ENCODE measurements at regions of chr1 and their contacts with region 1.

Region 1: GRCh38 chr1:150363426-150364230 is at the start of gene RPRD2:
- DNase-seq: peak; percentile 83 to 100 (median 99)
- ATAC-seq: peak; percentile 97
- H3K4me3 ChIP-seq: peak within 1 kb of the TSS; percentile 99
- H3K4me3 Mint-ChIP-seq: peak within 1 kb of the TSS; percentile 86 to 100 (median 98)
- H3K27ac ChIP-seq: peak within 1 kb of the TSS; percentile 84
- H3K27ac Mint-ChIP-seq: peak within 1 kb of the TSS; percentile 95 to 100 (median 98)
- H3K4me1 ChIP-seq: peaks cover 10% of the 10 kb centered on the region in 2 donors
- H3K4me1 Mint-ChIP-seq: peaks cover 25 to 37% (median 32%) of the 10 kb centered on the region in 7 donors
- H3K27me3 ChIP-seq: no peaks in the 10 kb centered on the region
- H3K27me3 Mint-ChIP-seq: peaks cover 0 to 2% (median 0%) of the 10 kb centered on the region in 5 donors
- total RNA-seq, gene RPRD2: 33.2 to 62.2 (median 40.6) TPM

Region 2: DNA sequence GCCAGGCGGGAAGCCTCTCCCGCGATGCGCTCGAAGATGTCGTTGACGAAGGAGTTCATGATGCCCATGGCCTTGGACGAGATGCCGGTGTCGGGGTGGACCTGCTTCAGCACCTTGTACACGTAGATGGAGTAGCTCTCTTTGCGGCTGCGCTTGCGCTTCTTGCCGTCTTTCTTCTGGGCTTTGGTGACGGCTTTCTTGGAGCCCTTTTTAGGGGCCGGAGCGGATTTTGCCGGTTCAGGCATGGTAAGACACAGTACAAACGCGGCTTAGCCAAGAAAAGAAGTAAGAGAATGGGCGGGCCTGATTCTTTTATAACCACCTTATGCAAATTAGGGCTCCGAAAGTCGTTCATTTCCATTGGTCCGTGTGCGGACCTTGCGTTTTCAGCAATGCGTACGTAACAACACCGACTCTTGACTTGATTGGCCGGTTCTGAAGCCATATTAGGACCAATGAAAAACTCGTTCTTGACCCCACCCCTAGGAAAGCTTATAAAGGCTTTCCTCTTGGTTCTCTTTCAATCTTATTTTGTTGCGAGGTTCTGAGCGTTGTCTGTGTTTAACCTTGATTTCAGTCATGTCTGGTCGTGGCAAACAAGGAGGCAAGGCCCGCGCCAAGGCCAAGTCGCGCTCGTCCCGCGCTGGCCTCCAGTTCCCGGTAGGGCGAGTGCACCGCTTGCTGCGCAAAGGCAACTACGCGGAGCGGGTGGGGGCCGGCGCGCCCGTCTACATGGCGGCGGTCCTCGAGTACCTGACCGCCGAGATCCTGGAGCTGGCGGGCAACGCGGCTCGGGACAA is 477.0 kb before region 1 on chr1:
- CTCF ChIA-PET with region 1: no interaction called
- POLR2A ChIA-PET with region 1: interaction called, 38 read pairs
- intact Hi-C with region 1: no loop called
- DNase-seq: peak; percentile 71 to 98 (median 95)
- ATAC-seq: peak; percentile 79
- H3K4me3 ChIP-seq: peak overlapping the region; percentile 97
- H3K4me3 Mint-ChIP-seq: no peak overlapping the region
- H3K27ac ChIP-seq: peak overlapping the region; percentile 93
- H3K27ac Mint-ChIP-seq: no peak overlapping the region
- H3K4me1 ChIP-seq: peaks cover 17 to 28% of the 10 kb centered on the region in 2 donors
- H3K4me1 Mint-ChIP-seq: peaks cover 10 to 15% (median 12%) of the 10 kb centered on the region in 7 donors
- H3K27me3 ChIP-seq: no peaks in the 10 kb centered on the region
- H3K27me3 Mint-ChIP-seq: no peaks in the 10 kb centered on the region

Region 3: DNA sequence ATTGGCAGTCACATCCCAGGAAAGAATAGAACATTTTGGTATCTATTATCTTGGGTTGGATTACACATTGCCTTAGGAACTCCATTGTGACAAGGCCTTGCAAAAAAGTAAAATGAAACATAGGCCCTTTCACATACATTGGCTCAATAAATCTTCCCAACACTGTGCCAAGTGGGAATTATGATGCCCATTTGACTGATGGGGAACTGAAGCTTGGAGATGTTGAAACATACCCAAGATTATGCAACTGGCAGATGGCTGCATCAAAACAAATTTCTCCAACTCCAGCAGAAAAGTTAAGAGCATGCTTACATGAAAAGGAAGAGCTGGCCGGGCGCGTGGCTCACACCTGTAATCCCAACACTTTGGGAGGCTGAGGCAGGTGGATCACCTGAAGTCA is 187.0 kb before region 1 on chr1:
- CTCF ChIA-PET with region 1: no interaction called
- POLR2A ChIA-PET with region 1: no interaction called
- intact Hi-C with region 1: no loop called
- DNase-seq: no peak
- ATAC-seq: no peak
- H3K4me3 ChIP-seq: no peak overlapping the region
- H3K4me3 Mint-ChIP-seq: no peak overlapping the region
- H3K27ac ChIP-seq: no peak overlapping the region
- H3K27ac Mint-ChIP-seq: peak overlapping the region in 1 of 9 donors; percentile 23
- H3K4me1 ChIP-seq: no peaks in the 10 kb centered on the region
- H3K4me1 Mint-ChIP-seq: peaks cover 0 to 6% (median 0%) of the 10 kb centered on the region in 7 donors
- H3K27me3 ChIP-seq: no peaks in the 10 kb centered on the region
- H3K27me3 Mint-ChIP-seq: peaks cover 0 to 3% (median 0%) of the 10 kb centered on the region in 5 donors

Region 4: DNA sequence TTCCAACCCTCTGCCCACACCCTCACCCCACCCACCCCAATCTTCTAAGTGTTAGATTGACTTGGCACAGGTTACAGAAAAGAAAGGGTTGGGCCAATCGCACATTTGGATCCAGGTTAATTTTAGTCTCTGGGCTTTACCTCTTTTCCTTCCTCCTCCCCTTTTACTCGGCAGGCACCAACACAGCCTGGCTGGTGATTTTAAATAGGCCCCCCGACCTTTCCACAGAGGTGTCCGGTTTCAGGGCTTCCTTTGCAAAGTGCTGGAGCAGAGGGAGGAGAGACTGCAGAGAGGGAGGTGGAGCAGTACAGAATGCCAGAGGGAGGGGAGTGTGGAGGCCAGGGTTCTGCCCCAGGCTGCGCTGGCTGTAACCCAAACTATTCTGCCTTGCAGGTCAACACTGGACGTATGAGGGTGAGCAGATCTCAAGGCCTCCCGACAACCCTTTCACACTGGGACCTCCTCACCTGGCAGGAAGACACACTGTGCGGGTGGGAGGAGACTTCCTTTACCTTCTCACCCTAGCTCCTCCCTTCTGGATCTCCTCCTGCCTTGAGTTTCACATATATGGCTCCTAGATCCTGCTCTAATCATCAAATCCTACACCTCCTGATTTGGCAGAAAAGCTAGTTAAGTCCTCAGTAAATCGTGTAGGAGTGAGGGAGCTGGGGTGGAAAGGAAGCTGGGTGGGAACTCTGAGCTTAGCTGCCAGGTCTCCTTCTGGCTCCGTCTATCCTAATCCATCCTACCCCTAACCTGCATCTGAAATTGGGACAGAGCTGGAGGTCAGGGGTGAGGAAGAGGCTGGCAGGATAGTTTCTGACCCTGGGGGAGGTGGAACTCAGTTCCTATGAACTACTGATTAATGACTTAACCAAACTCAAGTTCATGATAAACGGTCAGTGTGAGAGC is 103.6 kb before region 1 on chr1:
- CTCF ChIA-PET with region 1: no interaction called
- POLR2A ChIA-PET with region 1: interaction called, 13 read pairs
- intact Hi-C with region 1: no loop called
- DNase-seq: no peak
- ATAC-seq: no peak
- H3K4me3 ChIP-seq: no peak overlapping the region
- H3K4me3 Mint-ChIP-seq: peak overlapping the region in 1 of 10 donors; percentile 32
- H3K27ac ChIP-seq: no peak overlapping the region
- H3K27ac Mint-ChIP-seq: no peak overlapping the region
- H3K4me1 ChIP-seq: peaks cover 6 to 8% of the 10 kb centered on the region in 2 donors
- H3K4me1 Mint-ChIP-seq: peaks cover 6 to 23% (median 15%) of the 10 kb centered on the region in 7 donors
- H3K27me3 ChIP-seq: peaks cover 0 to 10% of the 10 kb centered on the region in 2 donors
- H3K27me3 Mint-ChIP-seq: peaks cover 13 to 49% (median 26%) of the 10 kb centered on the region in 5 donors

Region 5: GRCh38 chr1:150293433-150294168 is 70.0 kb before region 1 on chr1 and contains the start of gene MRPS21:
- CTCF ChIA-PET with region 1: no interaction called
- POLR2A ChIA-PET with region 1: interaction called, 4 read pairs
- intact Hi-C with region 1: loop called (anchors 1 to 2 kb)
- DNase-seq: peak; percentile 64 to 88 (median 83)
- ATAC-seq: peak; percentile 99
- H3K4me3 ChIP-seq: peak within 1 kb of the TSS; percentile 76
- H3K4me3 Mint-ChIP-seq: peak within 1 kb of the TSS; percentile 85 to 97 (median 92)
- H3K27ac ChIP-seq: peak within 1 kb of the TSS; percentile 92
- H3K27ac Mint-ChIP-seq: peak within 1 kb of the TSS; percentile 92 to 100 (median 98)
- H3K4me1 ChIP-seq: peaks cover 10 to 14% of the 10 kb centered on the region in 2 donors
- H3K4me1 Mint-ChIP-seq: peaks cover 20 to 45% (median 32%) of the 10 kb centered on the region in 7 donors
- H3K27me3 ChIP-seq: no peaks in the 10 kb centered on the region
- H3K27me3 Mint-ChIP-seq: no peaks in the 10 kb centered on the region
- total RNA-seq, gene MRPS21: 47.9 to 72.8 (median 67.5) TPM

Region 6: GRCh38 chr1:150429805-150430204 is 66.2 kb after region 1 on chr1:
- CTCF ChIA-PET with region 1: no interaction called
- POLR2A ChIA-PET with region 1: interaction called, 7 read pairs
- intact Hi-C with region 1: loop called (anchors 1 to 5 kb)
- DNase-seq: peak in 6 of 9 donors; percentile 3 to 35 (median 14)
- ATAC-seq: peak; percentile 42
- H3K4me3 ChIP-seq: no peak overlapping the region
- H3K4me3 Mint-ChIP-seq: no peak overlapping the region
- H3K27ac ChIP-seq: no peak overlapping the region
- H3K27ac Mint-ChIP-seq: peak overlapping the region in 8 of 9 donors; percentile 20 to 87 (median 53)
- H3K4me1 ChIP-seq: no peaks in the 10 kb centered on the region
- H3K4me1 Mint-ChIP-seq: peaks cover 2 to 37% (median 19%) of the 10 kb centered on the region in 7 donors
- H3K27me3 ChIP-seq: no peaks in the 10 kb centered on the region
- H3K27me3 Mint-ChIP-seq: no peaks in the 10 kb centered on the region

Region 7: GRCh38 chr1:150696590-150697524 is 333.2 kb after region 1 on chr1 and contains the start of gene GOLPH3L:
- CTCF ChIA-PET with region 1: no interaction called
- POLR2A ChIA-PET with region 1: no interaction called
- intact Hi-C with region 1: loop called in 1 of 2 experiments (anchors 5 kb)
- DNase-seq: peak; percentile 46 to 95 (median 92)
- ATAC-seq: peak; percentile 100
- H3K4me3 ChIP-seq: peak within 1 kb of the TSS; percentile 73
- H3K4me3 Mint-ChIP-seq: peak within 1 kb of the TSS; percentile 91 to 100 (median 98)
- H3K27ac ChIP-seq: peak within 1 kb of the TSS; percentile 82
- H3K27ac Mint-ChIP-seq: peak within 1 kb of the TSS; percentile 81 to 99 (median 95)
- H3K4me1 ChIP-seq: peaks cover 4 to 11% of the 10 kb centered on the region in 2 donors
- H3K4me1 Mint-ChIP-seq: peaks cover 13 to 49% (median 42%) of the 10 kb centered on the region in 7 donors
- H3K27me3 ChIP-seq: no peaks in the 10 kb centered on the region
- H3K27me3 Mint-ChIP-seq: peaks cover 0 to 12% (median 0%) of the 10 kb centered on the region in 5 donors
- total RNA-seq, gene GOLPH3L: 8.7 to 32.1 (median 23.6) TPM

Region 8: GRCh38 chr1:151059078-151059907 is 695.7 kb after region 1 on chr1 and contains the start of gene CDC42SE1:
- CTCF ChIA-PET with region 1: no interaction called
- POLR2A ChIA-PET with region 1: no interaction called
- intact Hi-C with region 1: loop called in 1 of 2 experiments (anchors 5 kb)
- DNase-seq: peak; percentile 76 to 85 (median 82)
- ATAC-seq: peak; percentile 84
- H3K4me3 ChIP-seq: peak within 1 kb of the TSS; percentile 82
- H3K4me3 Mint-ChIP-seq: peak within 1 kb of the TSS; percentile 95 to 100 (median 99)
- H3K27ac ChIP-seq: peak within 1 kb of the TSS; percentile 99
- H3K27ac Mint-ChIP-seq: peak within 1 kb of the TSS; percentile 93 to 99 (median 95)
- H3K4me1 ChIP-seq: peaks cover 11 to 26% of the 10 kb centered on the region in 2 donors
- H3K4me1 Mint-ChIP-seq: peaks cover 35 to 55% (median 41%) of the 10 kb centered on the region in 7 donors
- H3K27me3 ChIP-seq: no peaks in the 10 kb centered on the region
- H3K27me3 Mint-ChIP-seq: no peaks in the 10 kb centered on the region
- total RNA-seq, gene CDC42SE1: 362 to 516 (median 425) TPM

Region 9: DNA sequence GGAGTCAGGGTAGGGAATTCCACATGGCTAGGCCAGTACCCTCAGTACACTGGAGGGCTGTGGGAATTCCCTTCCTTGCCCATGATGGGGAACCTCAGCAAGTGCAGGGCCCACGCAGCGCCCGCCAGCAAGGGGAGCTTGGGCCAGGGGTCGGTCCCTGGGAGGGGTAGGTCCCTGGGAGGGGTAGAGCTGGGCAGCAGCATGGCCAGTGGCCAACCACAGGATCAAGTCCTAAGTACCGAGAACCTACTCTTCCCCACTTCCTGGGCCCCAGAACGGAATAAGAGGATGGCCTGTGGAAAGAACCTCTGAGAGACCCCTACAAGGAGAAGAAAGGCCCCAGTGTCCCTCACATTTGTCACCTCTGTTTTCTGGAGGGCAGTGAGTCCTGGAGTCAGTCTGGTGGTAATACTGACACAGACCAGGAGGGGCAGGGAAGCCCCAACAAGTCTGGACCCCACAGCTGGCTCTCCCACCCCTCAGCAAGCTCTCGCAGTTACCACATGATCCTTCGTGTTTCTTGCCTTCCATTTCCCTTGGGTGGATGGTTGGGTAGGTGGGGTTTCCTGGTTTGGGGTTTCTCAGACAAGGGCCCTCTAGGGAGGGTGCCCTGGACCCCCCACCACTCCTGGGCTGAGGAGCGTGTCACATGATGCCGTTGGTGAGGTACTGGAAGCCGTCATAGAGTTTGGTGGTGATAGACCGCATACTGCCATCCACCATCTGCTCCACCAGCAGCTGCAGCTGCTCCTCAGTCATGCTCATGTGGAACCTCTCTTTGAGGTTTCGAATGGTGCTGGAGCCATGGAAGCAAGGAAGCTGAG is 928.8 kb after region 1 on chr1:
- CTCF ChIA-PET with region 1: no interaction called
- POLR2A ChIA-PET with region 1: no interaction called
- intact Hi-C with region 1: no loop called
- DNase-seq: peak in 1 of 9 donors; percentile 23
- ATAC-seq: peak; percentile 47
- H3K4me3 ChIP-seq: no peak overlapping the region
- H3K4me3 Mint-ChIP-seq: no peak overlapping the region
- H3K27ac ChIP-seq: no peak overlapping the region
- H3K27ac Mint-ChIP-seq: peak overlapping the region in 7 of 9 donors; percentile 22 to 86 (median 66)
- H3K4me1 ChIP-seq: no peaks in the 10 kb centered on the region
- H3K4me1 Mint-ChIP-seq: peaks cover 7 to 28% (median 11%) of the 10 kb centered on the region in 7 donors
- H3K27me3 ChIP-seq: no peaks in the 10 kb centered on the region
- H3K27me3 Mint-ChIP-seq: no peaks in the 10 kb centered on the region

Measured in naive thymus-derived CD4-positive, alpha-beta T cell (primary cell).